Activated CD4-positive, alpha-beta T cell treated with anti-CD3 and anti-CD28 coated beads, Interleukin-2, amount 10 ng/mL, durations not matched to agents 24 days and 14 days (primary cell): ENCODE measurements at regions of chr9 and their contacts with region 1.

Region 1: DNA sequence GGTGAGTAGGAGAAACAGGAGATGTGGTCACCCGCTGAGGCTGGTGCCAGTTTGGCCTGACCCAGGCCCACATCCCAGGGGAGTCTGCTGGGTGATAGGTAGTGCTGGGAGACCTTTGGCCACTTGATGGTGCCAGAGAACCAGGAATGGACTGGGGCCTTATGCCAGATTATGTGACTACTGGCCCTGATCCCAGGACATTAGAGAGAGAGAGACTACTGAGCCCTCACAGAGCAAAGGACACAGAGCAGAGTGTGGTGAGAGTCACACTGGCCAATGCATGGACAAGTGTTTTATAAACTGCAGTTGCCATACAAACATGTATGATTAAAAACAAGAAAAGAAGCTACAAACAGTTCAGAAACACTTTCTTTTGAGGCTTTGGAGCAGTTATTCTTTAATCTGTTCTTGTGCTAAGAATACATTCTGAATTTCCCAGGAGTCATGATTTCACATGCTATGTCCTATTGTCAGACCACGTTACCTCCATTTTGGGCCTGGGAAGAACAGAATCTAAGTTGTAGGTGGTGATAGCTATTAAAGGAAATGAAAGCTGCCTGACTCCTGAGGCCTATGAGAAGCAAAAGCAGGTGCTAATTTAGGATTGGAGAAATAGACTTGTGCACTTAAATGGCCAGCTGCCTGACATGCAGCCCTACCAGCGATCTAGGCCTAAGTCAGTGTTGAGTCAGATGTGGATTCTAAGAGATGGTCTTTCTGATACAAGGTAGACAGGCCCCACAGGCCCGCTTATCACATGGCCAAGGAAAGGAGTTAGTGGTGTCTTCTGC is 32.6 kb upstream of the TMOD1 start:
- DNase-seq: peak; percentile 80
- H3K4me3 Mint-ChIP-seq: no peak overlapping the region
- H3K27ac Mint-ChIP-seq: no peak overlapping the region
- H3K4me1 Mint-ChIP-seq: no peaks in the 10 kb centered on the region
- H3K27me3 Mint-ChIP-seq: no peaks in the 10 kb centered on the region

Region 2: GRCh38 chr9:97559111-97559514 is 90.3 kb after region 1 on chr9:
- intact Hi-C with region 1: no loop called
- DNase-seq: peak; percentile 62
- H3K4me3 Mint-ChIP-seq: peak overlapping the region; percentile 52
- H3K27ac Mint-ChIP-seq: peak overlapping the region; percentile 38
- H3K4me1 Mint-ChIP-seq: peaks cover 10% of the 10 kb centered on the region
- H3K27me3 Mint-ChIP-seq: peaks cover 25% of the 10 kb centered on the region

Region 3: GRCh38 chr9:97598461-97599288 is 129.8 kb after region 1 on chr9:
- intact Hi-C with region 1: loop called (anchors 1 kb)
- DNase-seq: peak; percentile 93
- H3K4me3 Mint-ChIP-seq: peak overlapping the region; percentile 38
- H3K27ac Mint-ChIP-seq: no peak overlapping the region
- H3K4me1 Mint-ChIP-seq: peaks cover 8% of the 10 kb centered on the region
- H3K27me3 Mint-ChIP-seq: peaks cover 2% of the 10 kb centered on the region

Region 4: DNA sequence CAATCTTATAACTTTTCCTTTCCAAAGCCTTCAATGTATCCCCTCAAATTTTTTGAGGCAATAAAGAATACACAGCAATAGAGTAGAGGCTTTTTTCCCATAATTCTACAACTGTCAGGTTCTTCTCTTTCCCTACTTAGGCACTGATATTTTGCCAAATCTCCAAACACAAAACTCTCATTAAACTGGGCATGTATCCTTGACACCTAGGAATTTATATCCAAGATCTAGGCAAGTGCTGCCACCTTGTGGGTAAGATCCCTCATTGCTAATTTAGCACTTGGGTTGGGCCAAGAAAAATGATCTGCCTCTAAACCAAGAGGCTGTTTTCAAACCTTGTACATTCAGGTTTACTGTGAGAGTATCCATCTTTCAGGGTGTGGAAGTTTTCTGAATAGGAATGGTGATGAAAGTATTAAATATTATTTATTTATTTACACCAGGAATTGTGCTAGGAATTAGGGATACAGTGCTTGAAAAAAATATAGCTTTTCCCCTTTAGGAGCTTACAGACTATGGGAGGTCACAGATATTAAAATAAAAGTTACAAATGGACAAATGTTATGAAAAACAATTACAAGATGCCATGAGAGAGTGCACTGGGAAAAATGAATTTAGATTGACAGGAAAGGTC is 146.7 kb after region 1 on chr9:
- intact Hi-C with region 1: loop called (anchors 1 kb)
- DNase-seq: peak; percentile 89
- H3K4me3 Mint-ChIP-seq: no peak overlapping the region
- H3K27ac Mint-ChIP-seq: no peak overlapping the region
- H3K4me1 Mint-ChIP-seq: peaks cover 20% of the 10 kb centered on the region
- H3K27me3 Mint-ChIP-seq: no peaks in the 10 kb centered on the region